ENCODE measurements at regions of chr2 and their contacts with region 1.

Region 1: GRCh38 chr2:71082402-71083252 is 14.2 kb downstream of the NAGK start:
- DNase-seq: peak; percentile 88
- H3K4me3 Mint-ChIP-seq: no peak overlapping the region
- H3K27ac Mint-ChIP-seq: peak overlapping the region; percentile 15
- H3K4me1 Mint-ChIP-seq: peaks cover 17% of the 10 kb centered on the region
- H3K27me3 Mint-ChIP-seq: peaks cover 15% of the 10 kb centered on the region

Region 2: DNA sequence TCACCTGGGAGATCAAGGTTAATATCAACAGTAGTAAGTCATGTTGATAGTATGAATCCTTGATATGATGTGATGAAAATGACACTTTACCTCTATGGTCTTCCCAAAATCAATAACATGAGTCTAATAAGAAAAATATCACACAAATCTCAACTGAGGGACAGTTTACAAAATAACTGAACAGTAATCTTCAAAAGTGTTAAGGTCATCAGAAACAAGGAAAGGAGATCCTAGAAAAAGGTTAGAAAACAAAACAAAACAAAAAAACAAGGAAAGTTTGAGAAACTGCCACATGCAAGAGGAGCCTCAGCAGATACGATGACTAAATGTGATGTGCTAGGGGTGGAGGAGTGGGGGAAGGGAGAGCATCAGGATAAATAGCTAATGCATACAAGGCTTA is 31.2 kb after region 1 on chr2:
- CTCF ChIA-PET with region 1: interaction called, 3 read pairs
- POLR2A ChIA-PET with region 1: no interaction called
- intact Hi-C with region 1: loop called (anchors 2 kb)
- DNase-seq: no peak
- H3K4me3 Mint-ChIP-seq: no peak overlapping the region
- H3K27ac Mint-ChIP-seq: no peak overlapping the region
- H3K4me1 Mint-ChIP-seq: peaks cover 13% of the 10 kb centered on the region
- H3K27me3 Mint-ChIP-seq: no peaks in the 10 kb centered on the region